ENCODE measurements at regions of chr9 and their contacts with region 1.

Region 1: GRCh38 chr9:21070171-21070571 is 7.6 kb downstream of the IFNB1 start:
- DNase-seq: peak; percentile 70

Region 2: DNA sequence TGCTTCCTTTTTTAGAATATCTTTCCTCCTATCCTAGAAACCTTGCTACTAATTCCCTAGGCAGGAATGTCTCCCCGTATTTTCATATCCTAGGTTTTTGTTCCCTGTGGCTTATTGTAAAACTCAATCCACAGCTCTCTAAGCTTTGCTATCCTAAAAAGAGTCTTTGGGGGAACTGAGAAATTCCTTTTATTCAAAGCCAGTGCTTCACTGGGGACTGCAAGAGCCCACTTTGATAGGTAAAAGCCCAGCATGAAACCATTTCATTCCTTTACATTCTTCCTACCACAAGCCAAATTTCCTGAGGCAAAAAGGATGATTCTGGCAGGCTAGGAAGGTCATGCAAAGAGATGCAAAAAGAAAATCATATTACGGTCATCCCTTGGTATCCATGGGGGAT is 32.9 kb before region 1 on chr9:
- intact Hi-C with region 1: loop called in 1 of 2 experiments (anchors 1 kb)
- DNase-seq: no peak

Region 3: GRCh38 chr9:21141427-21141882 is 71.3 kb after region 1 on chr9 and contains the start of gene IFNW1:
- intact Hi-C with region 1: no loop called
- DNase-seq: no peak
- total RNA-seq, gene IFNW1: not detected